ENCODE measurements at regions of chr14 and their contacts with region 1.

Region 1: GRCh38 chr14:68586896-68587751 is 205.7 kb downstream of the ZFP36L1 start:
- DNase-seq: no peak
- H3K4me3 Mint-ChIP-seq: no peak overlapping the region
- H3K27ac Mint-ChIP-seq: peak overlapping the region; percentile 82
- H3K4me1 Mint-ChIP-seq: peaks cover 27% of the 10 kb centered on the region
- H3K27me3 Mint-ChIP-seq: no peaks in the 10 kb centered on the region
- CTCF ChIP-seq: no peak

Region 2: DNA sequence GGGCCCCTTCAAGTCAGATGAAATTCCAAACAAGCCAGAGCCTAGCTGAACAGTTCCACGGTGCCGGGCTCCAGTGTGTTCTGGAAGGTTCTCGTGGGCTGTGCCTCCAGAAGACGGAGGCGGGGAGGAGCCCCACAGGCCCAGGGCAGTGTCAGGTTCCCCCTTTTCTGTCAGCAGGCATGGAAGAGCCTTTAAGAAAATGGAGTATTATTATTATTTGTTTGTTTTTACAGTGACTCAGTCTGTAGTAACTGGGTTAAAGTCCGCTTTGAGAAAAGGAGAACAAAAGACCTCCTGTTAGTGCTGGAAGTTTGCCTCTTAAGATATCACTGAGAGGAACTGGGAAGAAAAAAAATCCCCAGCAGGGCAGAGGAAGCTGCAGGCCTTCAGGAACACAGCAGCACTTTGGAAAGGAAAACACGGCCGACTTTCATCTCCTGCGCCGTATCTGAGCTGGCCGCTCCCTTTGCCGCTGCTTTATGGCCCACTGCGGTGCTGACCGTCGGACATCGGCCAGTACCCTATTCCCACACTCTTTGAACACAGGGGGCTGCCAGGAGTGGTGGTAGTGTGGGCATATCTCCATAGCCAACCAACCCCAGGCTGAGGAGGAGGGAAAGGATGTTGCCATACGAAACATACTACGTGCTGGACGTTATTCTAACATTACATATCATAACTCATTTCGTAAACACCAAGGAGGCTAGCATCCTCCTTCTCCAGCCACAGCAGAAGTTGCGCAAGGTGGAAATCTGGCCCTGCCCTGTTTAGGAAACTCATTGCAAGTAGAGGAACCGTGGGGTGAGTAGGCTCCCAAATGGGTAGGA is 11.7 kb after region 1 on chr14:
- CTCF ChIA-PET with region 1: no interaction called
- POLR2A ChIA-PET with region 1: interaction called, 12 read pairs
- intact Hi-C with region 1: no loop called
- DNase-seq: peak; percentile 83
- H3K4me3 Mint-ChIP-seq: peak overlapping the region; percentile 16
- H3K27ac Mint-ChIP-seq: peak overlapping the region; percentile 84
- H3K4me1 Mint-ChIP-seq: peaks cover 21% of the 10 kb centered on the region
- H3K27me3 Mint-ChIP-seq: no peaks in the 10 kb centered on the region
- CTCF ChIP-seq: no peak

Region 3: DNA sequence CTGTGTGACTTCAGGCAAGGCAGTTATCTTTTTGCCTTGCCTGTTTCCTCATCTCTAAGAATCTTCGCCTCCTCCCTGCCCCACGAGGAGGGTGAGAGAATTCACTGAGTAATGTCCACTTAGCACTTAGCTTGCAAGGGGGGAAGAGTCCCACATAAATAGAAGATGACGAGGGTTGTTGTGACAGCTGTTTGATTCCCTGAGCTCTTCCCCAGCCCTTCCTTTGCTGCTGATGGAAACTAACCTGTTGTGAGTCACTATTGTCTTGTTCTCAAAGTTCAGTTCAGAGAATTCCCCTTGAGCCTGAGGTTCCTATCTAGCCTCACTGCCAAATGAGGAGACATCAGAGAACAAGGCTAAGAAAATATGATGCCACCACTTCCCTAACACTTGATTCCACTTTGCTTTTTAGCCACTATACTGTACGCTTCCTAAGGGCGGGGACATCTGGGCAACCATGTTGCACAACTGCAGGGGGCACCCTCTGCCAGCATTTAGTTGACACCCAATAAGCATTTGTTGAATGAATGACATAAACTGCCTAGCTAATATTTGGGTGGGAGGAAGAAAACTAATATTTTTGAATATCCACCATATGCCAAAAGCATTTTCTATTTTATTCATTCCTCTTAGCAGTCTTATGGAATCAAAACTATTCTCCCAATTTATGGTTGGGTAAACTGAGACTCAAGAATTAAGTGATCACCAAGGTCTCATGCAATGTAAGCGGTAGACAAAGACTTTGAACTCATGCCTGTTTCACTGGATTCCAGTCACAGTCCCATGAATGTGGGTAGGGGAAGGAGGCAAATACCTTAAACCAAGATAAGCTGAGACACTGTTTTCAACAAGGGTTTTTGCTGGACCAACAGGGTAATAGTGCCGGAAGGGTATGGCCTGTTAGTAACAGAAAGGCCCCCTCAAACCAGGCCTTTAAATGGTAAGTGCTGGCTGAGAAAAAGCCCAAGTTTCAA is 128.2 kb after region 1 on chr14:
- CTCF ChIA-PET with region 1: no interaction called
- POLR2A ChIA-PET with region 1: no interaction called
- intact Hi-C with region 1: no loop called
- DNase-seq: peak; percentile 64
- H3K4me3 Mint-ChIP-seq: no peak overlapping the region
- H3K27ac Mint-ChIP-seq: peak overlapping the region; percentile 34
- H3K4me1 Mint-ChIP-seq: peaks cover 15% of the 10 kb centered on the region
- H3K27me3 Mint-ChIP-seq: no peaks in the 10 kb centered on the region
- CTCF ChIP-seq: no peak

Measured in MCF 10A (cell line).